ENCODE measurements at regions of chr1 and their contacts with region 1.

Region 1: DNA sequence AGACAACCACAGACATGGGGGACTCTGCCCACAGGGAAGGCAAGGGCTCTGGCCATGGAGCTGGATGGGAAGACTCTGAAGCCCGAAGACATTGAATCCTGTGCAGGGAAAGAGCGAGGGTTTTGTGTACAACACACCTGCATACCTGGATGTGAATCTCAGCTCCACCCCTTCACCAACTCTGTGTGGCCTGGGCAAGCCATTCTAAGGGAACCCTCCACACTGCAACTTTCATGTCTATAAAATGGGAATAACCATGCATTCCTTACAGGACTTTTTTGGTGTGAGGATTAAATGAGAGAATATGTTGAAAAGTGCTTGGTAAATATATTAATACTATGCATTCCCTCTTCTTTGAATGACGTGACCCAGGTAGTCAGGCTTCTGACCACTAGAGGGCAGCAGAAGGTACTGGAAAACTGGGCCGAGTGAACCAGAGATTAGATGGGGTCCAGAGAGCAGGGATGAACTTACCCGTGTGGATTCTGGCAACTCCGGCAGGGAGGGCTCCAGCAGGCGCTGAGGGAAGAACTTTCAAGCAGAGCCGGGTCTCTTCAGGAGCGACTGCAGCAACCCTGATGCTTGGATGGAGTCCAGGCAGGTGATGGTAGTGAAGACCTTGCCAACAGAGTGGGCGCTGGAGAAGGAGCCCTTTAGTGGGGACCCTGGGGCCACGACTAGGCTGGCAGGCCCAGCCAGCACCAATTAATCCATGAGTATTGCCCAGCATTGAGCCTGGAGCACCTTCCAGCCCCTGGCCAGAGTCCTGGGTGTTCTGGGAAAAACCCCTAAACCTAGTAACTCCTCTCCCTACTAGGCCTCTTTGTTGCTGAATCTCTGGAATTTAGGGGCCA is 834 bp upstream of the ELF3 start:
- ATAC-seq: peak; percentile 53 to 90 (median 77)
- H3K4me3 ChIP-seq: no peak overlapping the region
- H3K27ac ChIP-seq: no peak overlapping the region
- H3K4me1 ChIP-seq: peaks cover 4 to 14% of the 10 kb centered on the region in 2 donors

Region 2: GRCh38 chr1:201506556-201507359 is 502.8 kb before region 1 on chr1 and contains the start of gene CSRP1:
- in situ Hi-C with region 1: no loop called
- ATAC-seq: peak; percentile 73 to 89 (median 82)
- H3K4me3 ChIP-seq: peak within 1 kb of the TSS; percentile 16 to 57 (median 36)
- H3K27ac ChIP-seq: no peak within 1 kb of the TSS
- H3K4me1 ChIP-seq: peaks cover 32 to 43% of the 10 kb centered on the region in 2 donors
- total RNA-seq, gene CSRP1: 9.0 to 109 (median 54.9) TPM

Region 3: GRCh38 chr1:201795066-201795465 is 214.5 kb before region 1 on chr1:
- in situ Hi-C with region 1: no loop called
- ATAC-seq: no peak
- H3K4me3 ChIP-seq: no peak overlapping the region
- H3K27ac ChIP-seq: no peak overlapping the region
- H3K4me1 ChIP-seq: peaks cover 6 to 9% of the 10 kb centered on the region in 2 donors

Region 4: GRCh38 chr1:202112839-202113672 is 103.5 kb after region 1 on chr1:
- in situ Hi-C with region 1: loop called in 6 of 9 experiments (anchors 5 to 25 kb)
- ATAC-seq: peak; percentile 36 to 95 (median 64)
- H3K4me3 ChIP-seq: no peak overlapping the region
- H3K27ac ChIP-seq: no peak overlapping the region
- H3K4me1 ChIP-seq: peaks cover 16 to 17% of the 10 kb centered on the region in 2 donors

Region 5: GRCh38 chr1:202122639-202123335 is 113.2 kb after region 1 on chr1 and contains the start of gene GPR37L1:
- in situ Hi-C with region 1: loop called in 8 of 9 experiments (anchors 5 to 25 kb)
- ATAC-seq: peak; percentile 54 to 97 (median 96)
- H3K4me3 ChIP-seq: no peak within 1 kb of the TSS
- H3K27ac ChIP-seq: peak within 1 kb of the TSS in 1 of 2 donors; percentile 35
- H3K4me1 ChIP-seq: peaks cover 5 to 24% of the 10 kb centered on the region in 2 donors
- total RNA-seq, gene GPR37L1: 0.27 to 9.8 (median 0.64) TPM

Region 6: GRCh38 chr1:202135221-202135721 is 125.7 kb after region 1 on chr1:
- in situ Hi-C with region 1: loop called in 1 of 9 experiments (anchors 10 kb)
- ATAC-seq: peak; percentile 31 to 93 (median 67)
- H3K4me3 ChIP-seq: no peak overlapping the region
- H3K27ac ChIP-seq: no peak overlapping the region
- H3K4me1 ChIP-seq: peaks cover 11 to 29% of the 10 kb centered on the region in 2 donors